ENCODE measurements at regions of chr4 and their contacts with region 1.

Region 1: DNA sequence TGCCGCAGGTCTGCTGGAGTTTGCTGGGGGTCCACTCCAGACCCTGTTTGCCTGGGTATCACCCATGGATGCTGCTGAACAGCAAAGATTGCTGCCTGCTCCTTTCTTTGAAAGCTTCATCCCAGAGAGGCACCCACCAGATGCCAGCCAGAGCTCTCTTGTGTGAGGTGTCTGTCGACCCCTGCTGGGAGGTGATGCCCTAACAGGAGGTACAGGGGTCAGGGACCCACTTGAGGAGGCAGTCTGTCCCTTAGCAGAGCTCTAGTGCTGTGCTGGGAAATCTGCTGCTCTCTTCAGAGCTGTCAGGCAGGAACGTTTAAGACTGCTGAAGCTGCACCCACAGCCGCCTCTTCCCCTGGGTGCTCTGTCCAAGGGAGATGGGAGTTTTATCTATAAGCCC is 162.7 kb downstream of the NAF1 start:
- DNase-seq: no peak
- ATAC-seq: no peak
- H3K4me3 ChIP-seq: no peak overlapping the region
- H3K27ac ChIP-seq: no peak overlapping the region
- H3K4me1 ChIP-seq: no peaks in the 10 kb centered on the region
- H3K27me3 ChIP-seq: no peaks in the 10 kb centered on the region
- CTCF ChIP-seq: no peak
- POLR2A ChIP-seq: no peak

Region 2: DNA sequence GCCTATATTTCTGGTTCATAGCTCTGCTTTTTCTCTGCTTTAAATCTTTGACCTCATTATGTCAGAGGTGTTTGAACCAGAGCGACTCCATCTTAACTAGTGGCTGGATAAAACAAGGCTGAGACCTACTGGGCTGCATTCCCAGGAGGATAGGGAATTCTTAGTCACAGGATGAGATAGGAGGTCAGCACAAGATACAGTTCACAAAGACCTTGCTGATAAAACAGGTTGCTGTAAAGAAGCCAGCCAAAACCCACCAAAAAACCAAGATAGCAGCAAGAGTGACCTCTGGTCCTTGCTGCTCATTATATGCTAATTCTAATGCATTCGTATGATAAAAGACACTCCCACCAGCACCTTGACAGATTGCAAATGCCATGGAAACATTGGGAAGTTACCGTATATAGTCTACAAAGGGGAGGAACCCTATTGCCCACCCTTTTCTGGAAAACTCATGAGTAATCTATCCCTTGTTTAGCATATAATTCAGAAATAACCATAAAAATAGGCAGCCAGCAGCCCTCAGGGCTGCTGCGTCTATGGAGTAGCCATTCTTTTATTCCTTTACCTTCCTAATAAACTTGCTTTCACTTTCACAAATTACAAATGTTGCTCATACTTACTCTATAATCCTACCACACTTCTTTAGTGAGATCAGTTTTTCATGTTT is 31.2 kb before region 1 on chr4:
- intact Hi-C with region 1: loop called in 1 of 10 experiments (anchors 2 kb)
- DNase-seq: no peak
- ATAC-seq: no peak
- H3K4me3 ChIP-seq: no peak overlapping the region
- H3K27ac ChIP-seq: no peak overlapping the region
- H3K4me1 ChIP-seq: no peaks in the 10 kb centered on the region
- H3K27me3 ChIP-seq: no peaks in the 10 kb centered on the region
- CTCF ChIP-seq: no peak
- POLR2A ChIP-seq: no peak

Region 3: GRCh38 chr4:163166041-163166579 is 162.1 kb after region 1 on chr4:
- intact Hi-C with region 1: no loop called
- DNase-seq: peak; percentile 28 to 73 (median 45)
- ATAC-seq: peak in 3 of 4 donors; percentile 67 to 80 (median 75)
- H3K4me3 ChIP-seq: peak overlapping the region; percentile 71 to 94 (median 89)
- H3K27ac ChIP-seq: peak overlapping the region; percentile 59 to 94 (median 86)
- H3K4me1 ChIP-seq: peaks cover 0 to 33% (median 19%) of the 10 kb centered on the region in 12 donors
- H3K27me3 ChIP-seq: no peaks in the 10 kb centered on the region
- CTCF ChIP-seq: no peak
- POLR2A ChIP-seq: no peak